ENCODE measurements at regions of chr7 and their contacts with region 1.

Region 1: DNA sequence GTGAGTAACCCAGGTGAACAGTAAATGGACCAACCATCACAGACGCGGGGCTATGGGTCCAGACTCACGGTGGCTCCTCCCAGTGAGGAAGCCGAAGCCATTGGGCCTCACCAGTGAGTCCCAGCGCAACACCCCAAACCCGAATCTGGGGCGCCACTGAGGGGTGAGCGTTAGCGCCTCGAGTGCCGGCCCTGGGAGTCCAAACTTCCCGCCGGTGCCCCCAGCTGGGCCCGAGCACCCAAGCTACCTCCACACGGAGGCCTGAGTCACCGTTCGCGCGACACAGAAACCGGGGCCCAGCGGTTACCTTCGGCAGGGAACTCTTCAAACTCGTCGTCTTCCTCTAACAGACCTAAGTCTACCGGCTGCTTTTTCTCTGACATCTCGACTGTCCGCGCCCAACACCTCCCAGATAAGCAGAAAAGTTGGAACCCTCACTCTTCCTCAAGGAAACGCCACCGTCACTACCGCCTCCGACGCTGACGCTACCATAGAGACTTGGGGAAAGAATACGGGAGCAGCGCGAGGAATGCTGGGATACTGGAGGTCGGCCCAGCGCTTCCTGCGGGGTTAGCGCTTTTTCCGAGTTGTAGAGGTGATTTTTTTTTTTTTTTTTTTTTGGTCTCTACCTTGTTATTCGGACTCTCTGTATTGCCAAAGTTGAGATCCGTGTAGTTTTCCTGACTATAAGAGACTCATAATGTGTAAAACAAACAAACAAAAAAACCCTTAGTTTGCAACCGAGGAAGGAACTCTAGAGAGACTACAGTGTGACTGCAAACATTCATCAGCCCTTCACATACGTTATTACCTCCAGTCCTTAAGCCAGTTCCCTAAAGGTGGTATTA is at the start of gene SEM1:
- DNase-seq: peak; percentile 83
- ATAC-seq: peak; percentile 92
- H3K4me3 Mint-ChIP-seq: peak within 1 kb of the TSS; percentile 87
- H3K27ac Mint-ChIP-seq: peak within 1 kb of the TSS; percentile 98
- H3K4me1 Mint-ChIP-seq: peaks cover 33% of the 10 kb centered on the region
- H3K27me3 Mint-ChIP-seq: peaks cover 4% of the 10 kb centered on the region
- total RNA-seq, gene SEM1: 42.9 to 46.4 TPM

Region 2: GRCh38 chr7:96143495-96144259 is 565.9 kb before region 1 on chr7:
- CTCF ChIA-PET with region 1: no interaction called
- POLR2A ChIA-PET with region 1: no interaction called
- intact Hi-C with region 1: no loop called
- DNase-seq: no peak
- ATAC-seq: no peak
- H3K4me3 Mint-ChIP-seq: no peak overlapping the region
- H3K27ac Mint-ChIP-seq: no peak overlapping the region
- H3K4me1 Mint-ChIP-seq: no peaks in the 10 kb centered on the region
- H3K27me3 Mint-ChIP-seq: no peaks in the 10 kb centered on the region

Region 3: DNA sequence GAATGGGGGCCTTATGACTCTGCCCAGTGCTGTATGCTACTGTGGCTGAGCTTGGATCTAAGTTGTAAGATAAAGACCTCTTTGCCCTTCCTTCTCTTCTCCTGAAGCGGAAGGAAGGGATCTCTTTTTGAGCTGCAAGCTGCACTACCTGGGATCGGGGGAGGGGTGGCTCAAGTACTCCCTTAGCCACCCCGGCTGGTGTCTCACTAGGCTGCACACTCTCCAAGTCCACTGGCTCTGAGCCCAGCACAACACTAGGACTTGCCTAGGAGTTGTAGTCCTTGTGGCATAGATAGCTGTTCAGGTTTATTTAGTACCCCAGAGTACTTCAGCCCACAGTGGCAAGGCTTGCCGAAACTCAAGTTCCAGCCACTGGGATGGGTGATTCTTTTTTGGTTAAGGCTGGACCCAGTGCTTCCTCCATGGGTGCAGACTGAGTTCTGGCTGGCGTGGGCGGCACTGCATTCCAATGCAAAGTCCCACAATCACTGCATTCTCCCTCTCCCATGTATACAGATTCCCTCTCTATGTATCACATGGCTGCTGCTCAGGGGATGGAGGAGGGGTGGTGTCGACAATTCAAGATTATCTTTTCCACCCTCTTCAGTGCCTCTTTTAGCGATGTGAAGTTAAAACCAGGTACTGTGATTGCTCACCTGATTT is 311.5 kb before region 1 on chr7:
- CTCF ChIA-PET with region 1: no interaction called
- POLR2A ChIA-PET with region 1: interaction called, 11 read pairs
- intact Hi-C with region 1: no loop called
- DNase-seq: no peak
- ATAC-seq: no peak
- H3K4me3 Mint-ChIP-seq: no peak overlapping the region
- H3K27ac Mint-ChIP-seq: no peak overlapping the region
- H3K4me1 Mint-ChIP-seq: no peaks in the 10 kb centered on the region
- H3K27me3 Mint-ChIP-seq: peaks cover 7% of the 10 kb centered on the region

Region 4: DNA sequence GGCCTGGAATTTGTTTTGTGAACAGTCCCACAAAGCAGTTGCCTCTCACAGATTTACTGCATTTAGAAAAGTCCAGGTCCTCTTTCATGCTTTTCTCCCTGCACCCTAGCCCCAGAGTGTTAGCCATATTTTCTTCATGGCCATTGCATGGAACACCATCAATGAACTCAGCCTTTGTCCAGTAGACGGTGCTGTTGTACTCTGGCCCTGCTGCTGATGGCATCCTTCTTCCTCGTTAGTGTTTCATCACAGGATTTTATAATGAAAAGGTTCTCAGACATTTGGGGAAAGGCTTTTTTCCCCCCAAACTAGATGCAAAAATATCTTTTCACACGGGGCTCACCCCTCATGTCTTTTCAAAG is 294.7 kb before region 1 on chr7:
- CTCF ChIA-PET with region 1: no interaction called
- POLR2A ChIA-PET with region 1: no interaction called
- intact Hi-C with region 1: loop called in 1 of 2 experiments (anchors 10 kb)
- DNase-seq: peak; percentile 66
- ATAC-seq: peak; percentile 55
- H3K4me3 Mint-ChIP-seq: no peak overlapping the region
- H3K27ac Mint-ChIP-seq: no peak overlapping the region
- H3K4me1 Mint-ChIP-seq: no peaks in the 10 kb centered on the region
- H3K27me3 Mint-ChIP-seq: peaks cover 10% of the 10 kb centered on the region

Region 5: DNA sequence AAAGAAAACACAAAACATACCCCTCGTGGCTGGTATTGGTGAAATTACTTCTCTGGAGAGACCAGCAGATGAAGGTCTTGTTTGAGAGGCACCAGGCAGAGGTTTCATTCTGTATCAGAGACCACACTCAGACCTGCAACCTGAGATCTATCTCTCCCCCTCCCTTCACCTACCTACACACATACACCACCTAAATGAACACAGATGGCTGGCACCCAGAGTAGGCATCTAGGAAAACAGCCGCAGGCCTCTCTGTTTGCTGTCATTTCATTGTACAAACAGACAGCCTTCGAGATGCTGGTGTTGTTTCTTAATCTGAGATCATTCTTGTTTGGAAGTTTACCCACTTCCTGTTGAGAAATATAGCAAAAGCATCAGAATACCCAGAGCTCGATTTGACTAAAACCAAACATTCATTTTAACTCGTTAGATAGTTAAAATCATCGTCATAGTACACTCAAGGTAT is 213.8 kb before region 1 on chr7:
- CTCF ChIA-PET with region 1: no interaction called
- POLR2A ChIA-PET with region 1: no interaction called
- intact Hi-C with region 1: loop called in 1 of 2 experiments (anchors 5 kb)
- DNase-seq: peak; percentile 56
- ATAC-seq: peak; percentile 92
- H3K4me3 Mint-ChIP-seq: peak overlapping the region; percentile 27
- H3K27ac Mint-ChIP-seq: peak overlapping the region; percentile 74
- H3K4me1 Mint-ChIP-seq: peaks cover 12% of the 10 kb centered on the region
- H3K27me3 Mint-ChIP-seq: no peaks in the 10 kb centered on the region

Region 6: DNA sequence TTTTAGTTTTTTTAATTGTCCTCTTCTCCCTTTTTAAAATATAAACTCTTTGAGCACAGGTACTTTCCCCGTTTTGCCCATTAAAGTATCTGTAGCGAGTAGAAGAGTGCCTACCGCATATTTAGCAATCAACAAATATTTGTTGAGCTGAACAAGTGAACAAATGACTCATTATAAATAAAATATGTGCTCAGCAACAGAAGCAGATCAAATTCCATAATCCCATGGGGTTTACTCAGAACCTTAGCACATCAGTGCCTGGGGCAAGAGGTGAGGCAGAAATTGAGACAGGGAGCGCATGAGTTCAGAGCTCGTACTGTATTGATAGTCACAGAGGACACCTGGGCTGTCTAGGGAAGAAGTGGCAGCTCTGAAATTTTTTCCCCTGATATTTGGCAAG is 160.9 kb before region 1 on chr7:
- CTCF ChIA-PET with region 1: no interaction called
- POLR2A ChIA-PET with region 1: no interaction called
- intact Hi-C with region 1: no loop called
- DNase-seq: no peak
- ATAC-seq: no peak
- H3K4me3 Mint-ChIP-seq: no peak overlapping the region
- H3K27ac Mint-ChIP-seq: no peak overlapping the region
- H3K4me1 Mint-ChIP-seq: no peaks in the 10 kb centered on the region
- H3K27me3 Mint-ChIP-seq: peaks cover 3% of the 10 kb centered on the region

Region 7: DNA sequence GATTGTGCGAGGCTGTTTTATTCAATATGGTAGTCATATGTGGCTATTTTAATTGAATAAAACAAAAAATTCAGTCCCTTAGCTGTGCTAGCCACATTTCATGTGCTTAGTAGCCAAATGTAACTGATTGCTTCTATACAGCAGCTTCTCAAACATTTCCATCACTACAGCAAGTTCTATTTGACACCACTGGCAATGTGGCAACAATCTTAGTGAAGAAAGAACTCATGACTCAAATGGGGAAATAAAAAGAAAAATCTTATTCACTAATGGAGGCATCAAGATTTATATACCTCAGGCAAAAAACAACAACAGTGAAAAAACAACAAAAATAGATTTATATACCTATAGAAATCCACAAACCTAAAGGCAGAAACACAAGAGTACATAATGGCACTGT is 17.9 kb before region 1 on chr7:
- CTCF ChIA-PET with region 1: no interaction called
- POLR2A ChIA-PET with region 1: no interaction called
- intact Hi-C with region 1: no loop called
- DNase-seq: no peak
- ATAC-seq: no peak
- H3K4me3 Mint-ChIP-seq: no peak overlapping the region
- H3K27ac Mint-ChIP-seq: no peak overlapping the region
- H3K4me1 Mint-ChIP-seq: peaks cover 16% of the 10 kb centered on the region
- H3K27me3 Mint-ChIP-seq: no peaks in the 10 kb centered on the region

Region 8: DNA sequence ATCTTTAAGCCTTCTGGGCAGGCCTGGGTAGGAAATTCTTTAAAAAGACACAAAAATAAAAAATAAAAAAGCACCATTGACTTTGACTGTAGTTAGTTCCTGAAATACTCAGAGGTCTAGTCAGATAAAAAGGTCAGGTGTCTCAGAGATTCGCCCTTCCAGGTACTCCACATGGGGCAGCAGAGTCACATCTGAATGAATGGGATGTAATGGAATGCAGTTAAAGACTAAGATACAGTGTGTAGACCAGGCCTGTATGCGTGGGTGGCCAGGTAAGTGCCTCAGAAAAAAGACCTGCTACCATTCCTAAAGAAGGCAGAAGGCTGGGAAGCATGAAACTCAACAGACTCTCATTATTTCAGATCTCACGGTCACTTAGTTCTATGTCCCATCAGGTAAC is 68.7 kb after region 1 on chr7:
- CTCF ChIA-PET with region 1: no interaction called
- POLR2A ChIA-PET with region 1: no interaction called
- intact Hi-C with region 1: no loop called
- DNase-seq: peak; percentile 5
- ATAC-seq: no peak
- H3K4me3 Mint-ChIP-seq: no peak overlapping the region
- H3K27ac Mint-ChIP-seq: no peak overlapping the region
- H3K4me1 Mint-ChIP-seq: no peaks in the 10 kb centered on the region
- H3K27me3 Mint-ChIP-seq: peaks cover 25% of the 10 kb centered on the region

Region 9: GRCh38 chr7:96837593-96837992 is 128.0 kb after region 1 on chr7:
- CTCF ChIA-PET with region 1: no interaction called
- POLR2A ChIA-PET with region 1: no interaction called
- intact Hi-C with region 1: loop called (anchors 2 kb)
- DNase-seq: peak; percentile 48
- ATAC-seq: peak; percentile 94
- H3K4me3 Mint-ChIP-seq: peak overlapping the region; percentile 4
- H3K27ac Mint-ChIP-seq: peak overlapping the region; percentile 61
- H3K4me1 Mint-ChIP-seq: peaks cover 34% of the 10 kb centered on the region
- H3K27me3 Mint-ChIP-seq: peaks cover 54% of the 10 kb centered on the region

Region 10: DNA sequence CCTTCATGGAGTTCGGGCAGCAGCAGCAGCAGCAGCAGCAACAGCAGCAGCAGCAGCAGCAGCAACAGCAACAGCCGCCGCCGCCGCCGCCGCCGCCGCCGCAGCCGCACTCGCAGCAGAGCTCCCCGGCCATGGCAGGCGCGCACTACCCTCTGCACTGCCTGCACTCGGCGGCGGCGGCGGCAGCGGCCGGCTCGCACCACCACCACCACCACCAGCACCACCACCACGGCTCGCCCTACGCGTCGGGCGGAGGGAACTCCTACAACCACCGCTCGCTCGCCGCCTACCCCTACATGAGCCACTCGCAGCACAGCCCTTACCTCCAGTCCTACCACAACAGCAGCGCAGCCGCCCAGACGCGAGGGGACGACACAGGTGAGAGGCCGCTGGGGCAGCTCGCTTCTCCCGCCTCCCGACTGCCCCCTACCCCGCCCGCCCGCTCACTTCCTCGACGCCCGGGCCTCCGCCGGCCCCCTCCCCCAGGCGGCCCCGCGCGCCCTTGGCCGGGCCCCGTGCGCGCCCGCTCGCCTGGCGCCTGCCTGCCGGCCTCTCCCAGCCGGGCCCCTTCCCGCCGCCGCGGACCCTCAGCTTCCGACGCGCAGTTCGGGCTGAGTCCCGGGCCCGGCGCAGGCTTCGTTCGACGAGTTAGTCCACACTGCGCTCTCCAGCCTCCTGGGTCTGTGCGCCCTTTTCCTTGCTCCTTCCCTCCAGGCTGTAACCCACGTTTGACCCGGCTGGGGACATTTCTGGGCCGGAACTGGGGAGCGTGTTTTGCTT is 296.6 kb after region 1 on chr7:
- CTCF ChIA-PET with region 1: no interaction called
- POLR2A ChIA-PET with region 1: no interaction called
- intact Hi-C with region 1: loop called in 1 of 2 experiments (anchors 5 kb)
- DNase-seq: peak; percentile 71
- ATAC-seq: peak; percentile 70
- H3K4me3 Mint-ChIP-seq: peak overlapping the region; percentile 65
- H3K27ac Mint-ChIP-seq: no peak overlapping the region
- H3K4me1 Mint-ChIP-seq: peaks cover 14% of the 10 kb centered on the region
- H3K27me3 Mint-ChIP-seq: peaks cover 75% of the 10 kb centered on the region

Region 11: DNA sequence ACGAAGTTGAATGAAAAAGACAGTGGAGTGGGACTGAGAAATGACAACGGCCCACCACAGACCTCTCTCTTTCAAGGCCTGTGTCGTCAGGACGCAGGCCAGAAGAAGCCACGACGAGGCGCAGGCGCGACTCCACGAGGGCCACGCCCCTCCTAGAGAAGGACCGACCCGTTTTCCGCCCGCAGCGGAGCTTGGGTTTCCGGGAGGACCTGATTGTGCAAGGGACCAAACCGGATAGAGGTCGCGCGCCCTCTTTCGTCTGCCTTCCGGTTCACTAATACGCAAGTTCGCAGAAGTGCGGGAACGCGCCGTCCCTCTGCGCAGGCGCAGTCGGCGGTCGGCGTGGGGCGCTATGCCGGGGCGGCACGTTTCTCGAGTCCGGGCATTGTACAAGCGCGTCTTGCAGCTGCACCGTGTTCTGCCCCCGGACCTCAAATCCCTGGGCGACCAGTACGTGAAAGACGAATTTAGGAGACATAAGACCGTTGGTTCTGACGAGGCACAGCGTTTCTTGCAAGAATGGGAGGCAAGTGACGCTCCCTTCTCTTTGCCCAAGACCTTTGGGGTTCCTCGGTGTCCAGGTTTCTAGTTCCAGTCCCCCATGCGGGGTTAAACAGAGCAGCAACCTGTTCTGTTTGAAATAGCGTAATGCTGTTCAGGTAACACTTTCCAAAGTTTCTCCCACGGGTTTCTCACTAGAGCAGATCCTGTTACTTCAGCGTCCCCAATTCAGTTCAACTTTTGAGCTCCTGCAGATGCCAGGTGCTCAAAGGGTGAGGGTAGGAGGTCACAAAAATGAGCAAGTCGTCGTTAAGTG is 408.0 kb after region 1 on chr7 and contains the start of gene SDHAF3:
- CTCF ChIA-PET with region 1: no interaction called
- POLR2A ChIA-PET with region 1: no interaction called
- intact Hi-C with region 1: loop called in 1 of 2 experiments (anchors 2 kb)
- DNase-seq: peak; percentile 99
- ATAC-seq: peak; percentile 95
- H3K4me3 Mint-ChIP-seq: peak within 1 kb of the TSS; percentile 82
- H3K27ac Mint-ChIP-seq: peak within 1 kb of the TSS; percentile 95
- H3K4me1 Mint-ChIP-seq: peaks cover 38% of the 10 kb centered on the region
- H3K27me3 Mint-ChIP-seq: no peaks in the 10 kb centered on the region
- total RNA-seq, gene SDHAF3: 30.2 to 44.3 TPM

Measured in activated CD4-positive, alpha-beta T cell treated with anti-CD3 and anti-CD28 coated beads for 36 hours (primary cell).